ACHN (cell line): ENCODE measurements at regions of chr2 and their contacts with region 1.

Region 1: GRCh38 chr2:10832203-10832936 is 19.8 kb upstream of the PDIA6 start:
- DNase-seq: peak; percentile 79

Region 2: DNA sequence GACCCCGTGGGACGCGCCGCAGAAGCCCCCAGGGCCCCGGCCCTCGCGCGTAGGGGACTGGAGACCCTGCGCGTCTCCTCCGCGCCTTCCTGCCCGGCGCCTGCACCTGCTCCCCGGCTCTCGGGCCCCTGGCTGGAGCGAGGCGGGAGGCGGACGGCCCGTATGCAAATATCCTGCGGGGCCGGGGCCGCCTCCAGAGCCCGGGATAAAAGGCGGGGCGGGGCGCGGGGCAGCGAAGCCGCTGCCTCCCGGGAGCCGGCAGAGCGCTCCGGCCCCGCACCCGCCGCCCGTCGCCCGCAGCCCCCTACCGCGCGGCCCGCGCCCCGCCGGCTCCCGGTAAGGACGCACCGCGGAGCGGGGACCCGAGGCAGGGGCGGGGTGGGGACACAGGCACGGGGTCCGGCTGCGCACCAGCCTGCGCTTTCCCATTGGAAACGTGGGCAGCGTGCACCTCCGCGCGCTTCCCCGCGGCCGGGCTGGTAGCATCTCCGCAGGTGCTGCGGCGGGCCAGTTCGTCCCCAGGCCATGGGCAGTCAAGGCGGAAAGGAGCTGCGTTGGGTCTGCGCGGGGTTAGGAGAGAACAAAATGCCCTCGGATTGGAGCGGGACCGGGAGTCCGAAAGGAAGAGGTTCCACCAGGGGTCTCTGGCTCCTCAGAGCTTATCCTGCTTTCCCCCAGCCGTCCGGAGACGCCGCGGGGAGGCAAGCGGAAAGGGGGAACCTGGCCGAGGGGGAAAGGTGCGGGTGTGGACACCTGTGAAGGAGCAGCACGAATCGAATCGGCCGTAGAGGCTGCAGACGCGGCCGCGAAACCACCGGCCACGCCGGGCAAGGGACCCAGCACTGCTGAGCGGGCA is 110.7 kb before region 1 on chr2 and contains the start of gene ATP6V1C2:
- in situ Hi-C with region 1: no loop called
- DNase-seq: peak; percentile 47

Region 3: GRCh38 chr2:11124503-11125068 is 292.2 kb after region 1 on chr2:
- in situ Hi-C with region 1: loop called (anchors 25 kb)
- DNase-seq: peak; percentile 72